GM18951 (cell line): ENCODE measurements at regions of chr19 and their contacts with region 1.

Region 1: DNA sequence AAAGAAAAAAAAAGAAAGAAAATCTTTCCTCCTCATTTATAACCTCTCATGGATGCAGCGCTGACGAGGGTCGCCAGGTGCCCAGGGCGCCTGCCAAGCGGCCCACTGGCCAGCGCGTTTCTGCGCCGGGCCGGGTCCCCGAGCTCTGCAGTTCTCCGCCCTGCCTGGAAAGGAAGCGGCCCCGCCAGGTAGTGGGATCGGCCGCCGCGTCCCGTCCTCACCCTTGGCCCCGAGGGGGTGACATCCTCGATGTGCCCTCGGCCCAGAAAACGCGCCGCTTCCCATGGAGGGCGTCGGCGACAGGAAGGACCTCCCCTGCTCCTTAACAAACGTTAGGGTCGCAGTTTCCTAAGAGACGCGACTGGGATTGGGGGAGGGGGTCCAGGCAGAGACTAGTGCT is 56.9 kb downstream of the ZNF726 start:
- POLR2A ChIP-seq: no peak

Region 2: GRCh38 chr19:23470873-23471545 is 500.6 kb before region 1 on chr19:
- in situ Hi-C with region 1: loop called (anchors 5 kb)
- POLR2A ChIP-seq: no peak